Activated naive CD4-positive, alpha-beta T cell treated with anti-CD3 and anti-CD28 coated beads for 36 hours (primary cell): ENCODE measurements at regions of chr6 and their contacts with region 1.

Region 1: DNA sequence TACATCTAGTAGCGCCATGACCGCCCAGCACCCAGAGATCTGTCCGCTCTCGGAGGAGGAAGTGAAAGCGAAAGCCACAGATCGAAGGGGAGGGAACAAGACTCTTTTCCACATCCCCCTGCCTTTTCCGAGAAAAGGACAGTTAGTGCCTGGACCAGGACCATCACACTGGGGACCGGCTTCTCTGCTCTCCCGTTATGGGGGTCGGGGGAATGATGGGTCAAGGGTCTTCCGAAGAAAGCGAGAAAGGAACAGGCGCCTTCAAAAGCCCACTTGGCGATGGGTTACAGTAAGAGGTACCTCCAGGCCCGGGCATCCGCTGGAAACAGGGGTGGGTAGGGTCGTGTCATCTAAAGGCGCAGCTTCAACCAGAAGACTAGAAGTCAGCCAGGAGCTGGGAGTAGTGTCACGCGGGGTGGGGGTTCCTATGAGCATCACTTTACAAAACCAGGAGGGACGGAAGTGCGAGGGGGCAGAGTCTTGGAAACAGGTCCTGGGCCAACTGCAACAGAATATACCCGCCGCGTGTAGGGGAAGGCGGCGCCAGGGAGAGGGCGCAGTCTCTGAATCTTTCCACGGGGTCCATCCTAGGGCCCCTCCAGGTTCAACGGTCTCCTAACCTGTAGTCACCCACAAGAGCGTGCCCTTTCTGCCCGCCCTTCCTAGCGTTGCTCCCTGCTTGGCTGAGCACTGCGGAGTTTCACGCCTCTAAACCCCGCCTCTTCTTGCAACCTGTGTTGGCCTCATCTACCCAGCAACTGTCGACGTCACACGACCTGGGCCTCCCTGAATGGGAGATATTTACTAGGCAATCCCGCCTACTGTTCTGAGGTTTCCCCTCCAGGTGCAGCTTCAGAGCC is at the start of gene PSMB8:
- DNase-seq: peak; percentile 100
- H3K4me3 Mint-ChIP-seq: peak within 1 kb of the TSS; percentile 98
- H3K27ac Mint-ChIP-seq: peak within 1 kb of the TSS; percentile 99
- H3K4me1 Mint-ChIP-seq: peaks cover 71% of the 10 kb centered on the region
- H3K27me3 Mint-ChIP-seq: no peaks in the 10 kb centered on the region
- total RNA-seq, gene PSMB8: 286 to 308 TPM

Region 2: DNA sequence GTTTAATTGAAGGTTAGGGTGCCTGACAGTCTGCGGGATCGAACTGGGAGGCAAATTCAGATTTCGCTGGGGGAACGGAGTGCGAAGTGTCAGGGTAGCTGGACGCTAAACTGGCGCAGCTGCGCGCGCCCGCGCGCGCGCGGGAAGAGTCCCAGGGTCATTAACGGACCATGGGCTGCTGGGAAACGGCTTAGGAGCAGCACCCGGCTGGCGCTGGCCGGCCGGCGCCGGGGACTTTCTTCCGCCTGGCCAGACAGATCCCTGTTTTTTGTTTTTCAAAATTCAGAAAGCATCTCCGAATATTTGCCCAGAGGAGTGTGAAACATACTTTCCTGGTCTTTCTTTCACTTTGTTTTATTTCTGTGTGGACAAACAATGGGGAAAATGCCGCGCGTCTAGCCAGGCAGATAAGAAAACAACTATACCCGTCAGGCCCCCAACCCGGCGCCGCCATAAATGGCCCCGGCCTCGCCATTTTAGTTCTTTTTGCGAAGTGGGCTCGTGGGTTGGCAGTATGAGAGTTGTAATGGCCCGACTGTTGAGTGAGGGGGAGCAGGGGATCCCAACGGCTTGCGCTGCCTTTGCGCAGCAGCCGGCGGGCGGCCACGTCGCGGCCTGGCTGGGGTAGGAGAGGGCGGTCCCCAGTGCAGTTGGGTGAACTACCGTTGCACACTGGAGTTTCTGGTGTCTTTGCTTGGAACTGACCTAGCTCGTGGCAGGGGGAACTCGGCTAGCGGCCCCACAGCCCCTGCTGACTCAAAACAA is 1009.6 kb before region 1 on chr6:
- CTCF ChIA-PET with region 1: no interaction called
- intact Hi-C with region 1: loop called (anchors 10 kb)
- DNase-seq: peak; percentile 80
- H3K4me3 Mint-ChIP-seq: peak overlapping the region; percentile 94
- H3K27ac Mint-ChIP-seq: peak overlapping the region; percentile 98
- H3K4me1 Mint-ChIP-seq: peaks cover 46% of the 10 kb centered on the region
- H3K27me3 Mint-ChIP-seq: no peaks in the 10 kb centered on the region

Region 3: DNA sequence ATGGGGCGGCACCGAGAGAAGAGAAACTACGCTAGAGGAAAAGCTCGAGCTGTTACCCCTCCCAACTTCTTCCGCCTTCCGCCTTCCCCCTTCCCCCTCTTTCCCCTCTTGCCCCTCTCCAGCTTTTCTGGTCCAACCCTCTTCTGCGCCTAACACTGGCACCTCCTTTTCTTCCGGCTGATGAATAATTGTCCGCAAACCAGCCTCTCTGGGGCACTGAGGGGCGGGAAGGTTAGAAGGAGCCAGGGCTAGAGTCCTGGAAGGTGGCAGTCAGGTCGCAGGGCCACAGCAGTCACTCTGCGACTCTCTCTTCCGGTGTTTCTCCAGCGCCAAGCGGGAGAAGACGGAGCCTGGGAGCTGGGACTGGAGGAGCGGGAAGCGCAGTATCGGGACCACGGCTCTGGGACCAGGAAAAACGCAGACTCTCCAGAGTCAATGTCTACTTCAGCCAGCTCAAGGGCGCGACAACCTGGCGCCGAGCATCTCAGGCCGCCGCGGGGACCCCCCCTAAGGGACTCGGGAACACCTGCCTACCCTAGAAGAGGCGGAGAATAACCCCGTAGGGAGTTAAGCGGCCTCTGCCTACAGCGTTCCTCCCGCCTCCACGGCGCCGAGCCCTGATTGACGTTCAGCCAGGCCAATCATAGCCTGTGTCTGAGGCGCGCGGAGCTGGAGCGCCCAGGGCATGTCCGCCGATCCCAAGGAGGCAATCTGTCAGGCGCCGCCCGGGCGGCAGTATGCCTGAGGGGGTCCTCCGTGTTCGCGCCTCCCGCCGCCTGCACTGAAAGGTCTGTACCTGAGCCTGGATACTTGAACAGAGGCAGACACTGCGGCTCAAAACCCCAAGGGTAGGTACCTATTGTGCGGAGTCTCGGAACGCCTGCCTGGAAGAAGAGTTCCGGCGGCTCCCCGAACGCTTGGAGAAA is 50.1 kb after region 1 on chr6:
- CTCF ChIA-PET with region 1: no interaction called
- intact Hi-C with region 1: loop called (anchors 2 kb)
- DNase-seq: peak; percentile 97
- H3K4me3 Mint-ChIP-seq: peak overlapping the region; percentile 97
- H3K27ac Mint-ChIP-seq: peak overlapping the region; percentile 96
- H3K4me1 Mint-ChIP-seq: peaks cover 37% of the 10 kb centered on the region
- H3K27me3 Mint-ChIP-seq: no peaks in the 10 kb centered on the region

Region 4: DNA sequence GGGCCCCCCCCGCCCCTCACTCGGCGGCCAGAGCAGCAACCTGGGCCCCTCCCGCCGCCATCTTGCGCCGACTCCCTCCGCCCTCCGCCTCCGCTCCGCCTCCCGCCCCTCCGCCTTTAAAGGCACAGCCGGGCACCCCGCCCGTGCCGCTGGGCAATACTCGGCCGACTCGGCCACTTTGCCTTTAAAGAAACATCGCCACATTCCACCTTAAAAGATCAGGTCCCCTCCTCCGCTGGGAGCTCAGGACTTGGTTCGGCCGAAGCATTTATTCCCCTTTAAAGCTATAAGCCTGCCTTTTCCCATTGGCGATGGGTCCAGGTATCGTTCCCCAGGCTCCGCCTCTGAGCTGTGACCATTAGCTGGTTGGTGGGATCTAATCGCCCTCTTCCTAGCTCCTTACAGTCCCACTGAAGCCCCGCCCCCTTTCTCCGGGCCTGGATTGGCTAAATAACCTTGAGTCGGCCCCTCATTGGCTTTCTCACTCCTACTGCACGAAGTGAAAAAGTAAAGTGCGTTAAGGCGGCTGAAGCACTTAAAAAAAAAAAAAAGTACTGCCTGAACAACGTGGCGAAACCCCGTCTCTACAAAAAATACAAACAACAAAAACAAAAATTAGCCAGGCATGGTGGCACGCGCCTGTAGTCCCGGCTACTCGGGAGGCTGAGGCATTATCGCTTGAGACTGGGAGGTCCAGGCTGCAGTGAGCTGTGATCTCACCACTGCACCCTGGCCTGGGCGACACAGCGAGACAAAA is 473.6 kb after region 1 on chr6 and contains the start of gene ZBTB22:
- CTCF ChIA-PET with region 1: no interaction called
- intact Hi-C with region 1: loop called (anchors 10 kb)
- DNase-seq: peak; percentile 97
- H3K4me3 Mint-ChIP-seq: peak within 1 kb of the TSS; percentile 94
- H3K27ac Mint-ChIP-seq: peak within 1 kb of the TSS; percentile 95
- H3K4me1 Mint-ChIP-seq: peaks cover 72% of the 10 kb centered on the region
- H3K27me3 Mint-ChIP-seq: no peaks in the 10 kb centered on the region
- total RNA-seq, gene ZBTB22: 8.8 to 9.0 TPM